Mammary epithelial cell (primary cell): ENCODE measurements at regions of chr1 and their contacts with region 1.

Region 1: GRCh38 chr1:10507111-10507879 is 32.5 kb downstream of the PEX14 start:
- DNase-seq: peak; percentile 72
- H3K4me3 ChIP-seq: no peak overlapping the region
- H3K27ac ChIP-seq: no peak overlapping the region
- H3K4me1 ChIP-seq: peaks cover 25% of the 10 kb centered on the region
- H3K27me3 ChIP-seq: no peaks in the 10 kb centered on the region
- CTCF ChIP-seq: peak; percentile 92 to 97

Region 2: DNA sequence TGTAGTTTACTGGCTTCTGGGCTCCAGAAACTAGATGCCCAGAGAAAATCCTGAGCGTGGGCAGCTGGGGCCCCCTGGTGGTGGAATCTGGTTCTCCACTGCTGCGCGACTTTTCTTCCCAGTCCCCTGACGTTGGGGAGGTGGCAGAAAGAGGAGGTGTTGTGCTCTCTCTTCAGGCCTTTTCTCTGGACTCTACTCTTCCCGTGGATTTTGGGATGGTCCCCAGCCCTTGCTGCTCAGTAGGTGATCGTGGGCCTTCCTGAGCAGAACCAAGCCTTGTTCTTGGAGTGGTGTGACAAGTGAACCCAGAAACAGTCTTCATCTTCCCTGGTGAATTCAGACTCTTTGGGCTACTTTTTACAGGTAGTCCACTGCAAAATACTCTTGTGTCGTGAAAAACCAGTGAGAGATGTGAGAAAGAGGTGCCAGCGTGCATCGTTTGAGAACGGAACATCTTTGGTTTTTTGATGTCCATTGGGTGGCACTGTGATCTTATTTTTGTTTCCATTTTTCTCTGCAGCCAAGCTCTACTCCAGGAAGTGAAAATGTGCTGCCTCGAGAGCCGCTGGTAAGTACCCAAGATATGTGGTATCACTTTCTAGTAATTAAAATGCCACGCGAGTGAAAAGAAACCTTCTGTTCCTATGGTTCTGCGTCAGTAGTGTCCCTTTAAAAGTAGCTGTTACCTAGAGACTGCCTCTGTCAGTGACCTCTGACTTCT is 12.4 kb before region 1 on chr1:
- CTCF ChIA-PET with region 1: no interaction called
- dilution Hi-C with region 1: no loop called
- in situ Hi-C with region 1: no loop called
- intact Hi-C with region 1: loop called (anchors 1 kb)
- DNase-seq: peak; percentile 74
- H3K4me3 ChIP-seq: peak overlapping the region in 1 of 3 experiments; percentile 19
- H3K27ac ChIP-seq: peak overlapping the region; percentile 96
- H3K4me1 ChIP-seq: peaks cover 27% of the 10 kb centered on the region
- H3K27me3 ChIP-seq: no peaks in the 10 kb centered on the region
- CTCF ChIP-seq: peak; percentile 78 to 93

Region 3: DNA sequence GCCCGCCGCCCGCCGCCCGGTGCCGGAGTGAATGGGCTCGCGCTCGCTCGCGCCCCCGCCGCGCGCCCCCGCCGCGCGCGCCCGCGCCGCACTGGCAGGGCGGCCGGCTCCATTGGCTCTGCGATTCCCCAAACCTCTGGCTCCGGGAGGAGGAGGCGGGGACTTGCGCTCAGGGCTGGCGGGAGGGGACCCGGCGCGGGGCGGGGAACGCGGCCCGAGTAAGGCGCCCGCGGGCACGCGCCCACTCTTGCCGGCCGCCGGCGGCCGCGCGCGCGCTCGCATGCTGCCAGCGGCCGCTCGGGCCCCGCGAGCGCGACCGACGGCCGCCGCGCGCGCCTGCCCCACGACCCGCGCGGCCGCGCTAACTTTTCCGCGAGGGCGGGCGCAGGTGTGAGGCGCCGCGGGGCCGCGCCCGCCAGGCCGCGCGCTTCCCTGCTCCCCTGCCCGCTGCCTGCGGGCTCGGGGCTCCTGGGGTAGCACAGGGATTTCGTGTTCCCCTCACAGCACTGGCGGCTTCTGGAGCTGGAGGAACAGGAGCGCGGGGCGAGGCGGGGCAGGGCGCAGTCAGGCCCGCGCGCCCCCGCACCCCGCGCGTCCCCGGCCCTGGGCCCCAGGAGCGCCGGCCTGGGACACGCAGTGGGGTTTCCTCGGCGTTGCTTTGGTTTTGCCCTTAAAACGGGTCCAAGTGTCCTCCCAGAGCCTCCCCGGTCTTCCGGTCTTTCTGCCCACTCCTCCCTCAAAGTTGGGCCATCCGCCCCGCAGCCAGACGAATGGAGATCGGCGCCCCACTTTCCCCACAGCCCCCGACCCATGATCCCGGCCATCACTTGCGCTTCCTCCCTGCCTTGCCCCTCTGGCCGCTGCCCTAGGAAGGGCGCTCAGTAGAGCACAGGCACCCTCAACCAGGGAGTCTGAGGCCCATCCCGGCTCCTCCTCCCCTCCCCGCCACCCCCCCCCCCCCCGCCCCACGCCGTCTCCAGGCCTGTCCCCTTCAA is 187.6 kb after region 1 on chr1:
- CTCF ChIA-PET with region 1: no interaction called
- dilution Hi-C with region 1: no loop called
- in situ Hi-C with region 1: no loop called
- intact Hi-C with region 1: loop called (anchors 2 kb)
- DNase-seq: peak; percentile 78
- H3K4me3 ChIP-seq: peak overlapping the region in 2 of 3 experiments; percentile 42 to 53
- H3K27ac ChIP-seq: no peak overlapping the region
- H3K4me1 ChIP-seq: peaks cover 16% of the 10 kb centered on the region
- H3K27me3 ChIP-seq: no peaks in the 10 kb centered on the region
- CTCF ChIP-seq: no peak

Region 4: DNA sequence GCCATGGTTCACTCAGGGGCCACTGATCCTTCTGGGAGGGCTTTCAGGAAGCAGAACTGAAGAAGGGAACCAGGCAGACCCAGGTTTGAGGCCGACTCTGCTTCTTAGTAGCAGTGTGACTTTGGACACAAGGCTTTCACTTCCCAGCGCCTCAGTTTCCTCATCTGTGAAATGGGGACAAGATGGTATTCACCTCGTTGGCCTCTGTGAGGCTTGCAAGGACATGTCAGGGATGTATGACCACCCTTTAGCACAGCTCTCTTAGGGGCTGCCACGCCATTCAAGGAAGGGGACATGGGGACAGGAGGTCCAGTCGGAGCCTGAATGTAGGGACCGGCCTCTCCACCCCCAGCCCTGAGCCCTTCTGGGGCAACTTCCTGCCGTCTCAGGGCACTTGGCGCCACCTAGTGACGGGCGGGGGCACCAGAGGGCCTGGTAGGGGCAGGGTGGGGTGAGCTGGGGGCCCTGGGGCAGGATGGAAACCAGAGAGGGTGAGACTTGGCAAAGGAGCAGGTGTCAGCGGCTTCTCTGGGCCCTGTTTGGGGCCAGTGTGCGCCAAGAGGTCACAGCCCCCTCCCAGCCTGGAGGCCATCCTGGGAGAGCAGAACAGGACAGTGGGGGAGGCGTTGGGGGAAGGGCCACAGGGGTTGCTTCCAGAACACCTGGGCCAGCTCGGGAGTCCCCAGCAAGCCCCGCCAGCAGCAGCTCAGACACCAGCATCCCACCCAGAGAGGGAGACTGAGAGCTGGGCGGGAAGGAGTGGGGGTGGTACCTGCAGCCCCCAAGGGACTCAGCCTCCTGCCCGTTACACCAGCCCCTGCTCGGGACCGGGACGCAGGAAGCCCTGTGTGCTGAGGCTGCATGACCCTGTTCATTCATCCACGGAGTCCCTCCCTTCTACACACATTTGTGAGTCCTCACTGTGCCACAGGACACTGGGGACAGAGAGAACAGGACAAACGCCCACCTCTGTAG is 402.7 kb after region 1 on chr1:
- CTCF ChIA-PET with region 1: no interaction called
- dilution Hi-C with region 1: no loop called
- in situ Hi-C with region 1: no loop called
- intact Hi-C with region 1: loop called (anchors 1 kb)
- DNase-seq: peak; percentile 27
- H3K4me3 ChIP-seq: no peak overlapping the region
- H3K27ac ChIP-seq: no peak overlapping the region
- H3K4me1 ChIP-seq: peaks cover 9% of the 10 kb centered on the region
- H3K27me3 ChIP-seq: no peaks in the 10 kb centered on the region
- CTCF ChIP-seq: peak; percentile 41 to 79

Region 5: DNA sequence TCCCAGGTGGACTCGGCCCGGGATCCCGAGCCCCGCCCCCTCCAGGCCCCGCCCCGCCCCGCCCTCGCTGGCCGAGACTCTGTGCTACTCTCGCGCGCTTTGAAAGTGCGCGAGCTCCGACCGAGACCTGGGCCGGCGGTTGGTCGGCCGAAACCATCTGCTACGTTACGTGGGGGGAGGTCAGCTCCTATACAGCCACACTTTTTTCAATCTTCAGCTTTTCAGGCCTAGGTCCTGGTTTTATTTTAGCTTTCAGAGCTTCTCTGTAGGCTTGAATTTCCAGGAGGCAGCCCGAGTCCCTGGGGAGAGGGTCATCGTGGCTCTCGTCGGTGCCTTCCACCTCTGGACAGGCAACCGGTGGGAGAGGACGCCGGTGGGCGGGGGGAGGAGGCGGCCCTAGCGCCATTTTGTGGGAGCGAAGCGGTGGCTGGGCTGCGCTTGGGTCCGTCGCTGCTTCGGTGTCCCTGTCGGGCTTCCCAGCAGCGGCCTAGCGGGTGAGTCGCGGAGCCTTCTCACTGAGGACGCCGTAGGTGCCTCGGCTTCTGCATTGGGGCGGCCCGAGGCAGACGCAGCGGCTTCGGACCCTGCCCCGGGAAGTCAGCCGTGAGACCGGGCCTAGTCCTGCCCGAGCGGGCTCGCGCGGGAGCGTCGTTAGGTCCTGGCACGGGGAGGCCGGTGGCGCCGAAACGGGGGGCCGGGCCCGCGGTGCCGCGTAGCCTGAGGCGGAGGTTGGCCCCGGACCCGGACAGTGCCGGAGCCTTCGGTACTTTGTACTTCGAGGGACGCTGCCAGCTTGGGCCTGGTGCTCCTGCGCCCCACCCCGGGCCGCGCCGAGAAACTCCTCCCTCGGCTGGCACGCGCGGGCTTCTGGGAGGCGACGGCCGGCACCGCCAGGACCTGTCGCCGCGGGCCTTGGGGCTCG is 505.2 kb after region 1 on chr1 and contains the start of gene TARDBP:
- CTCF ChIA-PET with region 1: no interaction called
- dilution Hi-C with region 1: no loop called
- in situ Hi-C with region 1: no loop called
- intact Hi-C with region 1: loop called (anchors 2 kb)
- DNase-seq: peak; percentile 90
- H3K4me3 ChIP-seq: peak within 1 kb of the TSS; percentile 79 to 97 (median 79)
- H3K27ac ChIP-seq: peak within 1 kb of the TSS; percentile 97
- H3K4me1 ChIP-seq: peaks cover 17% of the 10 kb centered on the region
- H3K27me3 ChIP-seq: no peaks in the 10 kb centered on the region
- CTCF ChIP-seq: no peak
- total RNA-seq, gene TARDBP: 32.2 to 122 TPM

Region 6: GRCh38 chr1:11735854-11736745 is 1228.8 kb after region 1 on chr1 and contains the start of gene AGTRAP:
- CTCF ChIA-PET with region 1: no interaction called
- dilution Hi-C with region 1: no loop called
- in situ Hi-C with region 1: no loop called
- intact Hi-C with region 1: no loop called
- DNase-seq: peak; percentile 86
- H3K4me3 ChIP-seq: peak within 1 kb of the TSS; percentile 81 to 99 (median 94)
- H3K27ac ChIP-seq: peak within 1 kb of the TSS; percentile 96
- H3K4me1 ChIP-seq: peaks cover 46% of the 10 kb centered on the region
- H3K27me3 ChIP-seq: no peaks in the 10 kb centered on the region
- CTCF ChIP-seq: peak in 1 of 2 donors; percentile 14
- total RNA-seq, gene AGTRAP: 105 to 109 TPM